ENCODE measurements at regions of chr6 and their contacts with region 1.

Region 1: GRCh38 chr6:100217225-100218012 is 223.4 kb upstream of the MCHR2 start:
- DNase-seq: peak; percentile 39
- H3K4me3 ChIP-seq: no peak overlapping the region
- H3K27ac ChIP-seq: no peak overlapping the region
- H3K27me3 ChIP-seq: no peaks in the 10 kb centered on the region
- CTCF ChIP-seq: no peak

Region 2: DNA sequence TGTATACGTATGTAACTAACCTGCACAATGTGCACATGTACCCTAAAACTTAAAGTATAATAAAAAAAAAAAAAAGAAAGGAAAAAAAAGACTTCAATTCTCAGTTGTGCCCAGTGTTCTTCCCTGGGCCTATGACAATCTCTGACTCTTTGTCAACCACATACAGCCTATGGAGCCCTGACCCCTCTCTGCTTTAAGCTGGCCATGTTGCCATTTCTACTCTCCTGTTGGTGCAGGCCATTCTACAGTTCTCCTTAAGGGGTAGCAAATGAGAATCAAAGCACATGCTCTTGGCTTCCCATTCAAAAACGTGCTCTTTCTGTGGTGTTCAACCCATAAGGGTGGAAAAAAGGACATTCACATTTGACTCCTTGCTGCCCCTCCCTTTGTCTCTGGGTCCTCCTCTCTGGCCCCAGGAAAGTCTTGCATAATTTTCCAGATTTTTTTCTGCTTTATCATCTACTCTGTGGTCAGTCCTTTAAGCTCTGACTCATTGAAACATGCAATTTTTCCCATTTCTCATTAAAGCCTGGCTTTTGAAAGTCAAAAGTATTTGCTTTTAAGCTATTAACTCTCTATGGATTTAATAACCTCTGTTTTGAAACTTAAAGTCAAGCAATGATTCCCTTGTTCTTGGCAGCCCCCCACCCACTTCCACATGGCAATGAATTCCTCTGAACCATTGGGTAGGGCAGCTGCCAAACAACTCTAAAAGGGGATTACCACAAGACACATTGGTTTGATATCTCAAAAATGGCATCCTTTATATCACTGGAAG is 14.8 kb before region 1 on chr6:
- CTCF ChIA-PET with region 1: no interaction called
- POLR2A ChIA-PET with region 1: interaction called, 12 read pairs
- DNase-seq: peak; percentile 77
- H3K4me3 ChIP-seq: no peak overlapping the region
- H3K27ac ChIP-seq: peak overlapping the region; percentile 92
- H3K27me3 ChIP-seq: no peaks in the 10 kb centered on the region
- CTCF ChIP-seq: no peak

Region 3: DNA sequence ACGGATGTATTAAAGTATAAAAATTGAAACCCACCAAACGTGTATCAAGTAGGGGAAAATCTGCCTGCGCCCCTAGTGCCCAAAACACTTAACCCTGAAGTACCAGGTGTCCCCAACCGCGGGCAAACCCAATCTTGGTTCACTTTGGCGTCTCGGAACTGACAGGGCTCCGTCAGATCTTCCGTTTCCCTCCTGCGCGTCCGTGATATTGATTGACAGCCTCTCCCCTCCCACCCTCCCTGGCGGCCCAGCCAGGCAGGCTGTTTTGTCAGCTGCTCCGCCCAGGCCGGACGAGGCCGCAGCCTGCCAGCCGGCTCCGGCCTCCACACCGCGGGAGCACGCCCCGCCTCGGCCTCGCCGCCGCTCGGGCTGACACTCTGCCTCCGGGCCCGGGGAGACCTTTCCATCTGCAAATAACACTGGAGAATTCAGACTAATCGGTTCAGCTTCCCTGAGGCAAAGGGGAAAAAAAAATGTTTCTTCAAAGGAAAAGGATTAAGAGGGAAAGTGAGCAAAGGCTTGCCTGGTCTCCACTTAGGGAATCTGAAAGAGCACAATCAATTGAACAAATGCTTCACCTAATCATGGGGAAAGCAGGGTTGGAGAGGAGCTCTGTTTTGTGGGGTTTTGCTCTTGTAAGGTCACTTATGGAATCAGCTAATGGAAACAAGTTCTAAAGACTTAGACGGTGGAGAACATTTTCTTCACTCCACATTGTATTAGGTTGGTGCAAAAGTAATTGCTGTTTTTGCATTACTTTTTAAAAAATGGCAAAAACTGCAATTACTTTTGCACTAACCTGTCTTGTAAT is 11.6 kb after region 1 on chr6:
- CTCF ChIA-PET with region 1: interaction called, 10 read pairs
- POLR2A ChIA-PET with region 1: no interaction called
- DNase-seq: peak; percentile 11
- H3K4me3 ChIP-seq: peak overlapping the region; percentile 52
- H3K27ac ChIP-seq: no peak overlapping the region
- H3K27me3 ChIP-seq: no peaks in the 10 kb centered on the region
- CTCF ChIP-seq: peak; percentile 40

Region 4: GRCh38 chr6:100269189-100269588 is 51.8 kb after region 1 on chr6:
- CTCF ChIA-PET with region 1: no interaction called
- POLR2A ChIA-PET with region 1: no interaction called
- DNase-seq: peak; percentile 53
- H3K4me3 ChIP-seq: no peak overlapping the region
- H3K27ac ChIP-seq: no peak overlapping the region
- H3K27me3 ChIP-seq: no peaks in the 10 kb centered on the region
- CTCF ChIP-seq: no peak

Measured in AG04450 (cell line).